Activated T-helper 2 cell treated with anti-CD3 and anti-CD28 coated beads, Interferon-gamma antibody, Interleukin-2, Interleukin-4, amounts not matched to agents 10 μg/mL and 5 μg/mL and 100 μg/mL, durations not matched to agents 14 hours and 24 hours and 36 hours (primary cell): ENCODE measurements at regions of chr19 and their contacts with region 1.

Region 1: DNA sequence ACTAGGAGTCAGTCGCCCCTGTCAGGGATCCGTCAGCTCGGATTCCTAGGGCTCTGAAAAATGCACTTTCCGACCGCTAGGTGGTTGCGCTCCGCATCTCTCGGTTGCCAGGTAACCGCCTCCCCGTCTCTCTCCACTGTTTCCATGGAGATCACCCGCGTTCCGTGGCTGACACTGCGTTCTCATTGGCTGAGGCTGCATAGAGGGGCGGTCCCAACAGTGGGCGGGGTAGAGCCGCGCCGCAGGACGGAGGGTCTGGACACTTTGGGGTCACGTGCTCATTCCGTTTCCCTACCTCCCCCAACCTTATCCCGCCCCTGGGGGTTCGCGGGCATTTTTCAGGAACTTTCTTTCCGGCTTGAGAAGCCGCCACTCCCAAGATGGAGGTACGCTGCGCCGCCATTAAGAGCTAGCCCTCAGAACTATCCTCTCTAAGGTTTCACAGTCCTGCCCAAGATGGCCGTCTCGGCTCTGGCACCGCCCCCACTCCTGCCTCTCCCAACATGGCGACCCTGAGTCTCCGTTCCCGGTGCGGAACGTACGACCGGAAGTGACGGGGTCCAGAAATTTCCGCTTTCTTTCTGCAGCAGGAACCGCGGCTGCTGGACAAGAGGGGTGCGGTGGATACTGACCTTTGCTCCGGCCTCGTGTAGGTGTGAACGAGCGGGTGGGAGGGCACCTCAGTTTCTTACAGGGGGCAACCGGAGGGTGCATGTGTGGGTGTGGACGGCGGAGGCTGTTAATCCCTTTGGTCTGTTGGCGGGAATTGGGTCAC is at the starts of genes ODAD3 and PRKCSH:
- DNase-seq: peak; percentile 99
- H3K4me3 Mint-ChIP-seq: peak within 1 kb of the TSS; percentile 96
- H3K27ac Mint-ChIP-seq: peak within 1 kb of the TSS; percentile 89
- H3K4me1 Mint-ChIP-seq: peaks cover 7% of the 10 kb centered on the region
- H3K27me3 Mint-ChIP-seq: no peaks in the 10 kb centered on the region
- total RNA-seq, gene ODAD3: 0.37 TPM in 1 of 2 replicates, not detected in the other
- total RNA-seq, gene PRKCSH: 282 and 298 TPM in 2 replicates

Region 2: DNA sequence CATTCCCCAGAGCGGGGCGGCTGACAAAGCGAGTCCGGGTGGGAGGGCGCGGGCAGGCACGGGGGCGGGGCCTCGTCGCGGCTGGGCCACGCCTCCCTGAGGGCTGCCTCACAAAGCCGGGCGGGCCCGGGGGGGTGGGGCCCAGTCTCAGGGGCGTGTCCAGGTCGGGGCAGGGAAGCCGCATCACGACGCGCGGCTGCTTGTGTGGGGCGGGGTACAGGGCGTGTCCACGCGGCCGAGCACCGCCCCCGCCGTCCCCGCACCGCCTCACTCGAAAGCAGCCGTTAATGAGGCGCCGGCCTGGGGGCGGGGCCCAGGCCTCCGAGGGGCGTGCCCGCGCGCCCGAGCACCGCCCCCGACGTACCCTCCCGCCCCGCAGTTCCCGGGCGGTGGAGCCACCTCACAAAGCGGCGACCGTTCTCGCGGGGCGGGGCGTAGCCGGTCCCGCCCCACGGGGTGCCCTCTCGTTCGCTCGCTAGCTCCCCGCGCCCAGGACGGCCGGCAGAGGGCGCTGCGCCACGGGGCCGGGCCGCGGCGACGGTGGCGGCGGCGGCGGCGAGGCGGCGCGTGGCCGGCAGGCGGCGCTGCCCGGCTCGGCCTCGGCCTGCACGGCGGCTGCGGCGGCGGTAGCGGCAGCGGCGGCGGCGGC is 564.2 kb before region 1 on chr19 and contains the start of gene CARM1:
- intact Hi-C with region 1: loop called (anchors 1 kb)
- DNase-seq: peak; percentile 97
- H3K4me3 Mint-ChIP-seq: peak within 1 kb of the TSS; percentile 89
- H3K27ac Mint-ChIP-seq: peak within 1 kb of the TSS; percentile 95
- H3K4me1 Mint-ChIP-seq: peaks cover 21% of the 10 kb centered on the region
- H3K27me3 Mint-ChIP-seq: no peaks in the 10 kb centered on the region
- total RNA-seq, gene CARM1: 87.5 and 89.3 TPM in 2 replicates

Region 3: GRCh38 chr19:11374433-11375142 is 60.7 kb before region 1 on chr19 and contains the start of gene SWSAP1:
- intact Hi-C with region 1: loop called (anchors 1 kb)
- DNase-seq: peak; percentile 97
- H3K4me3 Mint-ChIP-seq: peak within 1 kb of the TSS; percentile 38
- H3K27ac Mint-ChIP-seq: no peak within 1 kb of the TSS
- H3K4me1 Mint-ChIP-seq: peaks cover 27% of the 10 kb centered on the region
- H3K27me3 Mint-ChIP-seq: no peaks in the 10 kb centered on the region
- total RNA-seq, gene SWSAP1: 2.6 and 2.8 TPM in 2 replicates

Region 4: GRCh38 chr19:11387162-11388034 is 47.8 kb before region 1 on chr19:
- intact Hi-C with region 1: no loop called
- DNase-seq: no peak
- H3K4me3 Mint-ChIP-seq: no peak overlapping the region
- H3K27ac Mint-ChIP-seq: no peak overlapping the region
- H3K4me1 Mint-ChIP-seq: peaks cover 7% of the 10 kb centered on the region
- H3K27me3 Mint-ChIP-seq: peaks cover 15% of the 10 kb centered on the region

Region 5: DNA sequence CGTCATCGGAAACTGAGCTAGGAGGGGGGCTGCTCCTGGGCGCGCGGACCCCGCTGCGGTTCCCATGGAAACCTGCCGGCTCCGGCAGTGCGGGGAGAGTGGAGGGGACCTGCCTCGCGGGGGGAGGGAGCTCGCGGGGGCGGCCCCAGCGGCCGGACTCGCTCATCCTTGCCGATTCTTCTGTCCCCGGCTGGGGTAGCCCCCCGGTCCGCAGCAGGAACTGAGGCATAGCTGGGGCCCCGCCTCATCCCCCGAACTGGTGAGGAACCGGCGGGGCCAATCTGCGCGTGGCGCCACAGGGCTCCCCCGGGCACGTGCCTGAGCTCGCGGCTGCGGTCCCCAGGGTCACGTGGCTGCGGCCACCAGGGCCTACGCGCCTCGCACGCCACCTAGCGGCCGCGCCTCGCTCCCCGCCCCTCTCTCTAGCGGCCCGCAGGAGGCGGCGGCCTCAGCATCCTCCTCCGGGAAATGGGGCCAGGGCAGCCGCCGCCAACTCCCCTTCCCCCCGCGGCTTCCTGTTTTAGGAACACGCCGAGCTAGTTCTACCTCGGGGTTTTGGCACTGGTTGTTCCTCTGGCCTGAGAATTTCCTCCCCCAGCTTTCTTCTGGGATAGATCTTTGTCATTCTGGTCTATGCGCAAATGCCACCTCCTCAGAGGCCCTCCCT is 47.3 kb after region 1 on chr19:
- intact Hi-C with region 1: loop called (anchors 1 kb)
- DNase-seq: peak; percentile 84
- H3K4me3 Mint-ChIP-seq: peak overlapping the region; percentile 81
- H3K27ac Mint-ChIP-seq: peak overlapping the region; percentile 85
- H3K4me1 Mint-ChIP-seq: peaks cover 17% of the 10 kb centered on the region
- H3K27me3 Mint-ChIP-seq: peaks cover 28% of the 10 kb centered on the region

Region 6: GRCh38 chr19:11528551-11529341 is 93.5 kb after region 1 on chr19 and contains the start of gene ECSIT:
- intact Hi-C with region 1: loop called (anchors 2 kb)
- DNase-seq: peak; percentile 90
- H3K4me3 Mint-ChIP-seq: peak within 1 kb of the TSS; percentile 90
- H3K27ac Mint-ChIP-seq: peak within 1 kb of the TSS; percentile 78
- H3K4me1 Mint-ChIP-seq: peaks cover 23% of the 10 kb centered on the region
- H3K27me3 Mint-ChIP-seq: no peaks in the 10 kb centered on the region
- total RNA-seq, gene ECSIT: 42.7 and 43.5 TPM in 2 replicates